ENCODE measurements at regions of chr11 and their contacts with region 1.

Region 1: GRCh38 chr11:133927690-133928627 is 28.8 kb downstream of the IGSF9B start:
- DNase-seq: peak in 1 of 2 donors; percentile 38
- ATAC-seq: peak; percentile 75 to 83
- H3K4me3 ChIP-seq: peak overlapping the region in 1 of 4 donors; percentile 24
- H3K27ac ChIP-seq: no peak overlapping the region
- H3K4me1 ChIP-seq: peaks cover 2 to 4% of the 10 kb centered on the region in 2 donors
- H3K27me3 ChIP-seq: no peaks in the 10 kb centered on the region
- CTCF ChIP-seq: peak; percentile 65 to 88 (median 83)
- POLR2A ChIP-seq: no peak

Region 2: DNA sequence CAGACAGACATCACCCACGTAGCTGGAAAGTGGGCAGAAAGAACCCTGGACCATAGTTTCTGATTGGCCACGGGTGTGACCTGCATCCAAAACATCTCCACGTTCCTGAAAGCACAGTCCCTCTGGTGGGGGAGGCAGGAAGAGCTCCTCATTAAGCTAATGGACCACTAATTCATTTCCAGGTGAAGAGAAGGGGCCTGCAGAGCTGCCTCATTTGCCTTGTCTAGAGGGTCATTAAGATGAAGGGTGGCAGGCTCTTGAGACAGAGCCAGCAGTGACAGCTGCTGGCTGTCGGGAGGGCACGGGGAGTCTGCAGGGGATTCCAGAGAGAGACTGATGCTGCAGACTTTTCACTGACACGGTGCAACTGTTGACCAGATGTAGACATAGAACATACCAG is 246.1 kb before region 1 on chr11:
- in situ Hi-C with region 1: no loop called
- intact Hi-C with region 1: no loop called
- DNase-seq: no peak
- ATAC-seq: no peak
- H3K4me3 ChIP-seq: no peak overlapping the region
- H3K27ac ChIP-seq: no peak overlapping the region
- H3K4me1 ChIP-seq: no peaks in the 10 kb centered on the region
- H3K27me3 ChIP-seq: peaks cover 0 to 5% (median 0%) of the 10 kb centered on the region in 3 donors
- CTCF ChIP-seq: no peak
- POLR2A ChIP-seq: no peak

Region 3: DNA sequence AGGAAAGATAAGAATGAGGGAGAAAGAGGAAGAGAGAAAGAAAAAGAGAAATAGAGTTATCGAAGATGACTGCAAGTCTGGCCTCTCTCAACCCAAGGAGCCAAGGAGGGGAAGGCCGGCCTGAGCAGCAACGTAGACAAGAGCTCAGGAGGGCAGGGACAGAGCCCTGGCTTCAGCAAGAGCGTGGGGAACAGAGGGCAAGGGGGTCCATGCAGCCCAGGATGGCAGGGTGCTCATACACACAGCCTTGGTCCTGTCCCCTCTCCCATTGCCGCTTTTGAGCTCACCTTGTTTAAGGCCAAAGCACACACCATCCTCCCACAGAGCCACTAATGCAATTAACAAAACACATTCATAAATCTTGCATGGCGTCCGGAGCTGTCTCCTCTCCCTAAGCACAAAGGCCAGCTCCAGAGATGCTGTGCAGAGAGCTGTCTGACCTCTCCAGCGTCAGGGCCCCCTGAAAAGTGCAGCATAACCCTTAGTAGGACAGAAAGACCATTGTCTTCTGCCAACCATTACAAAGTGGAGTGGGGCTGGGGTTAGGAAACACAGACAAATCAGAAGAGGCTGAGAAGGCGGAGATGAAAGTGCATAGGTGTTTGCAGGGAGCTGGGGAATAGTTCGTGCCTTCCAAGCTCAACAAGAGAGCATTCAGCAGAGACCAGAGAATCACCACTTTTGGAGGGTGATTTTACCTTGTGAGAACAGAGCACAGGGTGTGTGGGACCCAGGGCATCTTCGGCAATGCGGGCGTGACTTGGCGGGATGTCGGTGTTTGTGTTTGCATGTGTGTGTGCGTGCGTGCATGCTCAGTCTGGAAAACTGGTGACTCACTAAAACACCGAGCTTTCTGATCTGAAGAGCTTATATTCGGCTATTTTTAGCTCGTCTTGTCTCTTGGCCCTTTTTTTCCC is 112.7 kb after region 1 on chr11:
- in situ Hi-C with region 1: loop called in 2 of 4 experiments (anchors 5 kb)
- intact Hi-C with region 1: loop called (anchors 1 kb)
- DNase-seq: no peak
- ATAC-seq: no peak
- H3K4me3 ChIP-seq: no peak overlapping the region
- H3K27ac ChIP-seq: no peak overlapping the region
- H3K4me1 ChIP-seq: peaks cover 21 to 30% of the 10 kb centered on the region in 2 donors
- H3K27me3 ChIP-seq: no peaks in the 10 kb centered on the region
- CTCF ChIP-seq: no peak
- POLR2A ChIP-seq: no peak

Region 4: DNA sequence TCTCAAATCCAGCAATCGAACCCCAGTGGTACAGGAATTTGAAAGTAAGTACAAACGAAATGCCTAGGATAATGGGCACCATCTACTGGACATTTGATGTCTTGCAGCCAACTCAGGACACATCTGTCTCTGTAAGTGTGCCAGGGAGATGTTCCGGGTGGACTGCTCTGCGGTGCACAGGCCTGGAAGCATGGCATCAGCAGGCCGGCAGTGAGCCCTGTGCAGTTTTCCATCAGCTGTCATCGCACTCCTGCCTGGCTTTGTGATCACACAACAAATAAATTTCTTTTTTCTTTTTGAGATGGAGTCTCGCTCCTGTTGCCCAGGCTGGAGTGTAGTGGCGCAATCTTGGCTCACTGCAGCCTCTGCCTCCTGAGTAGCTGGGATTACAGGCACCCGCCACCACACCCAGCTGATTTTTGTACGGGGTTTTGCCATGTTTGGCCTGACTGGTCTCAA is 211.9 kb after region 1 on chr11:
- in situ Hi-C with region 1: loop called (anchors 10 to 25 kb)
- intact Hi-C with region 1: loop called (anchors 2 kb)
- DNase-seq: peak in 1 of 2 donors; percentile 53
- ATAC-seq: peak; percentile 88 to 95
- H3K4me3 ChIP-seq: no peak overlapping the region
- H3K27ac ChIP-seq: no peak overlapping the region
- H3K4me1 ChIP-seq: no peaks in the 10 kb centered on the region
- H3K27me3 ChIP-seq: no peaks in the 10 kb centered on the region
- CTCF ChIP-seq: peak; percentile 78 to 86 (median 82)
- POLR2A ChIP-seq: no peak

Measured in gastrocnemius medialis (tissue), 4 donors.